Heart right ventricle (tissue), 16 donors: ENCODE measurements at regions of chr2 and their contacts with region 1.

Region 1: GRCh38 chr2:221073326-221074049 is 498.6 kb downstream of the EPHA4 start:
- DNase-seq: peak in 1 of 2 donors; percentile 22
- ATAC-seq: peak; percentile 51 to 97 (median 94)
- H3K4me3 ChIP-seq: no peak overlapping the region
- H3K27ac ChIP-seq: peak overlapping the region in 3 of 10 donors; percentile 7 to 46 (median 42)
- H3K4me1 ChIP-seq: peaks cover 0 to 18% (median 5%) of the 10 kb centered on the region in 9 donors
- H3K27me3 ChIP-seq: no peaks in the 10 kb centered on the region
- CTCF ChIP-seq: no peak

Region 2: DNA sequence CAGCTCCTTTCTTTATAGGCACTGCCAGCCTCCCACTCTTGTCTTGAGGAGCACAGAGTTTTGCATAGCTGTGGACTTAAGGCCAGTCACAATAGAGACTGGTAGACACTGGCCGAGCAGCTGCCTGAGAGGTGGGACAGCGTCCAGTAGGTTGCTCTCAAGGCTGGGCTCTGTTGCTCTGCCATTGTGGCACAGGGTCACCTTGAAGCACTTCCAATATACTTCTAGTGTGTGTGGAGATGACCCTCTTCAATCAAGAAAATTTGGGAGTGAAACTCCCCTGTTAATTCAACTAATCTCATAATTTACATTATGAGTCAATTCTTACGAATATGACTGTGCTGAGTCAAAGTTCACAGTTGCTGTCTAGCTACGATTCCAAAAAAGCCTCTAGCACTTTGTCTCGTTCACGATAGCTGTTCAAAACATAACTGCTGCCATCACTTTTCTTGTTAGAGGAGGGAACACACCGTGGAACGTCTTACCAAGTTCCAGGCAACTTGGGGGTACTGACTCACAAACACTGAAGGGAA is 137.6 kb before region 1 on chr2:
- intact Hi-C with region 1: loop called in 1 of 10 experiments (anchors 5 kb)
- DNase-seq: peak in 1 of 2 donors; percentile 20
- ATAC-seq: peak in 5 of 8 donors; percentile 47 to 76 (median 59)
- H3K4me3 ChIP-seq: peak overlapping the region in 1 of 10 donors; percentile 33
- H3K27ac ChIP-seq: peak overlapping the region in 7 of 10 donors; percentile 23 to 58 (median 41)
- H3K4me1 ChIP-seq: peaks cover 0 to 22% (median 0%) of the 10 kb centered on the region in 9 donors
- H3K27me3 ChIP-seq: no peaks in the 10 kb centered on the region
- CTCF ChIP-seq: no peak

Region 3: DNA sequence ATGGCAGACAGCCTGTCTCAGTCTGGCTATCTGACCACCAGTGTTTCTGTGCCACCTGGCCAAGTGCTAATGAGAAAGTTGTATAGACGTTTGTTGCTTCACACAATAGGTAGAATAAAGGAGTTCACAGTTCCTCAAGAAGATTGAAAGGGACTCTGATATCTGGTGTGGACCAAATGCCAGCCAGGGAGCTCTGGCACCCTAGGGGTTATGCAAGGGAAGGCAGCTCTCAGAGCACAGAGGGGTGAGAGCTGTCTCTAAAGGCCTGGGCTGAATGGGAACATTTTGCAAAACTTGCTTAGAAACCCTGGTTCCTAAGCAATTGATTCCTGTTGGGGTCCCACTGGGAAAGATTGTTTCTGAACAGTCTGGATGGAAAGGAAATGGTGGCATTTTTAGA is 55.2 kb before region 1 on chr2:
- intact Hi-C with region 1: no loop called
- DNase-seq: no peak
- ATAC-seq: no peak
- H3K4me3 ChIP-seq: no peak overlapping the region
- H3K27ac ChIP-seq: no peak overlapping the region
- H3K4me1 ChIP-seq: peaks cover 0 to 7% (median 0%) of the 10 kb centered on the region in 9 donors
- H3K27me3 ChIP-seq: no peaks in the 10 kb centered on the region
- CTCF ChIP-seq: no peak